Naive thymus-derived CD4-positive, alpha-beta T cell (primary cell): ENCODE measurements at regions of chr2 and their contacts with region 1.

Region 1: GRCh38 chr2:159738509-159739390 is 26.4 kb downstream of the MARCHF7 start:
- DNase-seq: no peak
- ATAC-seq: peak; percentile 66
- H3K4me3 ChIP-seq: no peak overlapping the region
- H3K4me3 Mint-ChIP-seq: no peak overlapping the region
- H3K27ac ChIP-seq: no peak overlapping the region
- H3K27ac Mint-ChIP-seq: peak overlapping the region in 4 of 9 donors; percentile 2 to 43 (median 26)
- H3K4me1 ChIP-seq: peaks cover 0 to 3% of the 10 kb centered on the region in 2 donors
- H3K4me1 Mint-ChIP-seq: peaks cover 27 to 68% (median 47%) of the 10 kb centered on the region in 7 donors
- H3K27me3 ChIP-seq: no peaks in the 10 kb centered on the region
- H3K27me3 Mint-ChIP-seq: no peaks in the 10 kb centered on the region

Region 2: GRCh38 chr2:159728629-159729028 is 10.1 kb before region 1 on chr2:
- CTCF ChIA-PET with region 1: interaction called, 6 read pairs
- POLR2A ChIA-PET with region 1: interaction called, 3 read pairs
- intact Hi-C with region 1: loop called in 1 of 2 experiments (anchors 1 kb)
- DNase-seq: no peak
- ATAC-seq: no peak
- H3K4me3 ChIP-seq: no peak overlapping the region
- H3K4me3 Mint-ChIP-seq: peak overlapping the region in 4 of 10 donors; percentile 0 to 35 (median 6)
- H3K27ac ChIP-seq: no peak overlapping the region
- H3K27ac Mint-ChIP-seq: peak overlapping the region in 4 of 9 donors; percentile 2 to 69 (median 10)
- H3K4me1 ChIP-seq: no peaks in the 10 kb centered on the region
- H3K4me1 Mint-ChIP-seq: peaks cover 31 to 72% (median 57%) of the 10 kb centered on the region in 7 donors
- H3K27me3 ChIP-seq: no peaks in the 10 kb centered on the region
- H3K27me3 Mint-ChIP-seq: no peaks in the 10 kb centered on the region

Region 3: GRCh38 chr2:159755788-159756187 is 17.0 kb after region 1 on chr2:
- CTCF ChIA-PET with region 1: no interaction called
- POLR2A ChIA-PET with region 1: no interaction called
- intact Hi-C with region 1: loop called in 1 of 2 experiments (anchors 2 kb)
- DNase-seq: no peak
- ATAC-seq: peak; percentile 32
- H3K4me3 ChIP-seq: no peak overlapping the region
- H3K4me3 Mint-ChIP-seq: no peak overlapping the region
- H3K27ac ChIP-seq: no peak overlapping the region
- H3K27ac Mint-ChIP-seq: no peak overlapping the region
- H3K4me1 ChIP-seq: no peaks in the 10 kb centered on the region
- H3K4me1 Mint-ChIP-seq: peaks cover 0 to 32% (median 20%) of the 10 kb centered on the region in 7 donors
- H3K27me3 ChIP-seq: no peaks in the 10 kb centered on the region
- H3K27me3 Mint-ChIP-seq: no peaks in the 10 kb centered on the region